Activated CD4-positive, alpha-beta T cell treated with anti-CD3 and anti-CD28 coated beads for 36 hours (primary cell): ENCODE measurements at regions of chr3 and their contacts with region 1.

Region 1: GRCh38 chr3:177426878-177427495 is 229.7 kb upstream of the TBL1XR1 start:
- DNase-seq: peak; percentile 77
- ATAC-seq: peak; percentile 97
- H3K4me3 Mint-ChIP-seq: peak overlapping the region; percentile 47
- H3K27ac Mint-ChIP-seq: peak overlapping the region; percentile 92
- H3K4me1 Mint-ChIP-seq: peaks cover 32% of the 10 kb centered on the region
- H3K27me3 Mint-ChIP-seq: peaks cover 3% of the 10 kb centered on the region

Region 2: GRCh38 chr3:176633511-176633910 is 793.5 kb before region 1 on chr3:
- CTCF ChIA-PET with region 1: no interaction called
- POLR2A ChIA-PET with region 1: no interaction called
- intact Hi-C with region 1: no loop called
- DNase-seq: no peak
- ATAC-seq: no peak
- H3K4me3 Mint-ChIP-seq: no peak overlapping the region
- H3K27ac Mint-ChIP-seq: no peak overlapping the region
- H3K4me1 Mint-ChIP-seq: no peaks in the 10 kb centered on the region
- H3K27me3 Mint-ChIP-seq: peaks cover 2% of the 10 kb centered on the region

Region 3: DNA sequence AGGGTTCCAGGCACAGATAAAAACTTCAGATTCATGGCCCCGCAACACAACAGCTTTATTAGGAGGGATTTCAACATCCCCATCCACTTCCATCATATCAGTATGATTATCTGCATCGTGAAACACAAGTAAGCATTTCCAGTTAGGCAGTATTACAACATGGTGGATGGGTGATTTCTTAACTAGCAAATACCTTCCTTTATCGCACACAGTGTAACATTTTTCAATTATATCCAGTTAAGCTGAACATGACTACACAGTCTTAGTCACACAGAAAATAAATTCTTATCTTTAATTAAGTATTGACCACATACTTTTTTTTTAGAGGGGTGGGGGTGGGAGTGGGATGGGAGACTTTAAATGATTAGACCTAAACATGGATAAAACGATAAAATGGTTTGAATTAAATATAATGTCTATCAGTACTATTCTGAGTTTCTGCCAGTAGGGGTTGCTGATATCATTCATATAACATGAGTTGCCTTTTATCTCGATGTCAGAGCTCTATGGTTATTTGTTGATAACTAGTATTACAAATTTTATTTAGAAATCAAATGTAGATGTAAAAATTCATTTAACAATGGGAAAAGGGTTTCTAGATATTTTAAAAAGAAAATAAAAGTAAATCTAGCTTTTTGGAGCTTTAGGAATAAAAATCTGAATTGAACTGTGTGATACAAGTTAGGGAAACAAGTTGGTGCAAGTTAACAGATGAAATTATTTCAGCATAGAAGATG is 376.3 kb before region 1 on chr3:
- CTCF ChIA-PET with region 1: no interaction called
- POLR2A ChIA-PET with region 1: no interaction called
- intact Hi-C with region 1: loop called in 1 of 2 experiments (anchors 2 kb)
- DNase-seq: no peak
- ATAC-seq: peak; percentile 60
- H3K4me3 Mint-ChIP-seq: no peak overlapping the region
- H3K27ac Mint-ChIP-seq: peak overlapping the region; percentile 31
- H3K4me1 Mint-ChIP-seq: peaks cover 12% of the 10 kb centered on the region
- H3K27me3 Mint-ChIP-seq: no peaks in the 10 kb centered on the region

Region 4: DNA sequence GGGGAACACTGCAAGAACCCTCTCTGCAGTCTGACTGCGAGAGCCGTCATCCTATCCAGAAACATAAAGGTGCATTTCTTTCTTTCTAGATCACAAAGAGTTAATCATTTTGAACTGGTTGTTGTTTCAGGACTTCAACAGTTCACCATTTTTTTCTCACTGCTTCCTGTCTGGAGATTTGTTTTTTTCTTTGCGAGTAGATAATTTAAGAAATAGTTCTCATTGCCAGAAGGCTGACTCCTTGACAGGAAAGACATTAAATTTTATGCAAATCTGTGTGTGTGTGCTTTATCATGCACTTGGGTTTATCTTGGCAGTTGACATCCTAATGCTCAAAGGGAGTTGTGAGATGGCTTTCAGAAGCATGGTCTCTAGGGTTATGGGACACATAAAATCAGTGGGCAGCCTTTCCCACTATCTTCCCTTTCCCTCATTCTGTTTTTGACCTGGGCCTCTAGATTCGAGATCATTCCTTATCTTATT is 106.2 kb before region 1 on chr3:
- CTCF ChIA-PET with region 1: no interaction called
- POLR2A ChIA-PET with region 1: no interaction called
- intact Hi-C with region 1: loop called (anchors 1 to 2 kb)
- DNase-seq: peak; percentile 23
- ATAC-seq: peak; percentile 78
- H3K4me3 Mint-ChIP-seq: no peak overlapping the region
- H3K27ac Mint-ChIP-seq: peak overlapping the region; percentile 30
- H3K4me1 Mint-ChIP-seq: peaks cover 31% of the 10 kb centered on the region
- H3K27me3 Mint-ChIP-seq: peaks cover 3% of the 10 kb centered on the region

Region 5: DNA sequence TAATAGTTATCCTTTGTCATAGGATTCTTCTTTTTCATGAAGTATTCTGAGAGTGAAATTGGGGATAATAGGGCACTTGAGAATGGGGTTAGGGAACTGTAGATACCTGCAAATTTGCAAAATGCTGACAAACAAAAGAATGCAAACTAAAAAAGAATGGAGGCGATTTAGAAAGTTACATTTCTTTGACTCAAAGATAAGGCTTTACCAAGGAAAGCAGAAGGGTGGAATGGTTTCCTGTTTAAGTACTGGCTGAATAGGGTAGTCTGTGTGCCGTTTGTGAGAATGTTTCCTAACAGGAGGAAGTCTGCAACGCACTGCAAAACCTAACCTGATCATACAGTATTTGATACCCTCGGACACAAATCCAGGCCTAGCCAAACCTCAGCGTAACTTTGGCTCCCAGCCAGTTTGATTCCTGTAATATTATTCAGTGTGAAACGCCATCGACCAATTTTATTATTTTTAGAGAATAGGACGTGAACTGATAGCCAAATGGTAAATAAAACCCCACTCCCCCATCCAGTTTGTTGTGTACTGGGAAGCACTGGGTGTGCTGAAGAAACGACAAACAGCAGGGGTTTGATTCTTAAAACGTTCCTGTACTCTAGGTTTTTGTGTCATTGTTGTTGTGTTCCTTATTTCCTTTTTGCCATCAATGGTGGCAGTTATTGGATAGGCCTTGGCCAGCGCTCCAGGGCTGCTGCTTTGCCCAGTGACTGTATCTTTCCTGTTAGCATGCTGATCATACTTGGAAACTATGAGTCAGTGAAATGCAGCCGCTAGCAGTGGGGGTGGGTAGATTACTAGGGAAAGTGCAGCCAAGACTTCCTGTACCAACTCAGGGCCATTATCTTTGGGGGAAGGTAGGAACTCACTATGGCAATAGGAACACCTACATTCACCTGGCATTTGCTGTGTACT is 81.7 kb before region 1 on chr3:
- CTCF ChIA-PET with region 1: interaction called, 3 read pairs
- POLR2A ChIA-PET with region 1: no interaction called
- intact Hi-C with region 1: loop called (anchors 1 kb)
- DNase-seq: peak; percentile 84
- ATAC-seq: peak; percentile 93
- H3K4me3 Mint-ChIP-seq: peak overlapping the region; percentile 44
- H3K27ac Mint-ChIP-seq: peak overlapping the region; percentile 88
- H3K4me1 Mint-ChIP-seq: peaks cover 40% of the 10 kb centered on the region
- H3K27me3 Mint-ChIP-seq: no peaks in the 10 kb centered on the region

Region 6: GRCh38 chr3:177787279-177788041 is 360.5 kb after region 1 on chr3:
- CTCF ChIA-PET with region 1: no interaction called
- POLR2A ChIA-PET with region 1: no interaction called
- intact Hi-C with region 1: loop called in 1 of 2 experiments (anchors 2 kb)
- DNase-seq: peak; percentile 32
- ATAC-seq: peak; percentile 89
- H3K4me3 Mint-ChIP-seq: no peak overlapping the region
- H3K27ac Mint-ChIP-seq: peak overlapping the region; percentile 52
- H3K4me1 Mint-ChIP-seq: peaks cover 26% of the 10 kb centered on the region
- H3K27me3 Mint-ChIP-seq: no peaks in the 10 kb centered on the region